ENCODE measurements at regions of chr11 and their contacts with region 1.

Region 1: GRCh38 chr11:119115484-119116234 is 5.7 kb upstream of the HINFP start:
- DNase-seq: peak; percentile 58 to 80 (median 65)
- ATAC-seq: peak; percentile 37 to 72 (median 59)
- H3K4me3 ChIP-seq: peak overlapping the region in 2 of 12 donors; percentile 23 to 37
- H3K27ac ChIP-seq: peak overlapping the region in 5 of 12 donors; percentile 3 to 91 (median 42)
- H3K4me1 ChIP-seq: peaks cover 0 to 34% (median 3%) of the 10 kb centered on the region in 12 donors
- H3K27me3 ChIP-seq: no peaks in the 10 kb centered on the region
- CTCF ChIP-seq: no peak
- POLR2A ChIP-seq: no peak

Region 2: DNA sequence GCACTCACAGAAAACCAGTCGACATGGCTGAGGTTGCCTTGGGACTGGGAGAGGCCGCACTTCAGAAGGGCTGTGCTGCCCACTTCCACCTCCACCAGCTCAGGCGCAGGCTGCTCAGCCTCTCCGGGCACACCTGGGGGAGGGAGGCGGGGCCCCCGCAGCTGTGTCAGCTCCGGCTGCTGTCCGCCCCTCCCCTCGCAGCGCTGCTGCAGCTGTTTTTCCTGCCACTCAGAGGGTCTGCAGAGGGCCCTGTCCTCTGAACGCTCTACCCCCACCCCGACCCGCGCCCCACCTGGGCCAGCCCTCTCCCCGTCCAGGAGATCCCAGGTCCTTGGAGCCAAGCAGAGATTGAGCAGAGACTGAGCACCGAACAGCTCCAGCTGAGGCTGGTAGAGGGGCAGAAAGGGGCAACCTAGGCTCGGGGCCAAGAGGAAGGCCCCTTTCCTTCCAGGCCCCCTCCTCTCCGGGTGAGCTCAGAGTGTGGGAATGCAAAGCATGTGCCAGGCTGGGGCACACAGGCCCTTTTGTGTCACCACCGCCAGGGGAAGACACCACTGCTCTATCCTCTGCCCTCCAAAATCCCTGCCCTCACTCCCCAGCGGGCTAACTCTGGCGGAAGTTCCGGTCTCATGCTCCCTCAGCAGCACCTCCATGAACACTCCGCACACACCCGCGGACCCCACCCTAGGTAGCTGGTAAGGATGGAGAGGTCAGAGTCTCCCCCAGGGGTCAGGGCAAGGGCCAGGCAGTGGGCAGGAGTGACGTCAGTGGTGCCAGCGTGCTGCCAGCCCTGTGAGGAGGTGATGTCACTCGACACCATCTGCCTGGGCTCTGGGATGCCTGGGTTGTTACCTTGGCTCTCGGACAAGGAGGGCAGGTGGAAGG is 199.7 kb after region 1 on chr11:
- intact Hi-C with region 1: loop called in 1 of 10 experiments (anchors 10 kb)
- DNase-seq: peak; percentile 55 to 69 (median 61)
- ATAC-seq: peak; percentile 23 to 46 (median 26)
- H3K4me3 ChIP-seq: peak overlapping the region; percentile 25 to 86 (median 75)
- H3K27ac ChIP-seq: peak overlapping the region; percentile 81 to 99 (median 93)
- H3K4me1 ChIP-seq: peaks cover 0 to 66% (median 40%) of the 10 kb centered on the region in 12 donors
- H3K27me3 ChIP-seq: peaks cover 0 to 33% (median 0%) of the 10 kb centered on the region in 9 donors
- CTCF ChIP-seq: peak in 8 of 12 donors; percentile 7 to 34 (median 10)
- POLR2A ChIP-seq: no peak